Ascending aorta (tissue), 2 donors: ENCODE measurements at regions of chr11 and their contacts with region 1.

Region 1: GRCh38 chr11:95790123-95790932 is at the start of gene CEP57:
- DNase-seq: peak; percentile 86 to 99
- H3K4me3 ChIP-seq: peak within 1 kb of the TSS; percentile 95 to 98
- H3K27ac ChIP-seq: peak within 1 kb of the TSS; percentile 91 to 100
- H3K4me1 ChIP-seq: peaks cover 0 to 22% of the 10 kb centered on the region in 2 donors
- H3K27me3 ChIP-seq: no peaks in the 10 kb centered on the region
- CTCF ChIP-seq: no peak
- total RNA-seq, gene CEP57: 5.4 TPM

Region 2: DNA sequence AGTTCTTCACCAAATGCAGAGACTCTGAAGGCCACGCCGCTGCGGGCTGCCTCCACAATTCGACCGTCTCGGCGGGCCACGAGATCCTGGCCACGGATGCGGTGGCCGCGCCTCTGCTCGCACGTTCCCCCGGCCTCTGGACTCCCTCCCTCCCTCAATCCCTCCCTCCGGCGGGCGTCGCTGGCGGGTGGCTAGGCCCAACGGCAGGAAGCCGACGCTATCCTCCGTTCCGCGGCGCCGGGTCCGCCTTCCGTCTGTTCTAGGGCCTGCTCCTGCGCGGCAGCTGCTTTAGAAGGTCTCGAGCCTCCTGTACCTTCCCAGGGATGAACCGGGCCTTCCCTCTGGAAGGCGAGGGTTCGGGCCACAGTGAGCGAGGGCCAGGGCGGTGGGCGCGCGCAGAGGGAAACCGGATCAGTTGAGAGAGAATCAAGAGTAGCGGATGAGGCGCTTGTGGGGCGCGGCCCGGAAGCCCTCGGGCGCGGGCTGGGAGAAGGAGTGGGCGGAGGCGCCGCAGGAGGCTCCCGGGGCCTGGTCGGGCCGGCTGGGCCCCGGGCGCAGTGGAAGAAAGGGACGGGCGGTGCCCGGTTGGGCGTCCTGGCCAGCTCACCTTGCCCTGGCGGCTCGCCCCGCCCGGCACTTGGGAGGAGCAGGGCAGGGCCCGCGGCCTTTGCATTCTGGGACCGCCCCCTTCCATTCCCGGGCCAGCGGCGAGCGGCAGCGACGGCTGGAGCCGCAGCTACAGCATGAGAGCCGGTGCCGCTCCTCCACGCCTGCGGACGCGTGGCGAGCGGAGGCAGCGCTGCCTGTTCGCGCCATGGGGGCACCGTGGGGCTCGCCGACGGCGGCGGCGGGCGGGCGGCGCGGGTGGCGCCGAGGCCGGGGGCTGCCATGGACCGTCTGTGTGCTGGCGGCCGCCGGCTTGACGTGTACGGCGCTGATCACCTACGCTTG is 1246.4 kb before region 1 on chr11 and contains the start of gene FUT4:
- intact Hi-C with region 1: loop called (anchors 10 kb)
- DNase-seq: peak; percentile 44 to 90
- H3K4me3 ChIP-seq: peak within 1 kb of the TSS; percentile 81 to 93
- H3K27ac ChIP-seq: peak within 1 kb of the TSS; percentile 97 to 100
- H3K4me1 ChIP-seq: peaks cover 7 to 14% of the 10 kb centered on the region in 2 donors
- H3K27me3 ChIP-seq: no peaks in the 10 kb centered on the region
- CTCF ChIP-seq: no peak
- total RNA-seq, gene FUT4: 3.2 TPM

Region 3: GRCh38 chr11:95067039-95067840 is 723.1 kb before region 1 on chr11:
- intact Hi-C with region 1: loop called (anchors 1 kb)
- DNase-seq: peak in 1 of 2 donors; percentile 93
- H3K4me3 ChIP-seq: peak overlapping the region; percentile 88 to 95
- H3K27ac ChIP-seq: peak overlapping the region; percentile 98 to 99
- H3K4me1 ChIP-seq: peaks cover 0 to 14% of the 10 kb centered on the region in 2 donors
- H3K27me3 ChIP-seq: no peaks in the 10 kb centered on the region
- CTCF ChIP-seq: peak; percentile 71 to 78 (median 73)

Region 4: GRCh38 chr11:95821640-95822039 is 31.3 kb after region 1 on chr11:
- intact Hi-C with region 1: no loop called
- DNase-seq: no peak
- H3K4me3 ChIP-seq: no peak overlapping the region
- H3K27ac ChIP-seq: no peak overlapping the region
- H3K4me1 ChIP-seq: no peaks in the 10 kb centered on the region
- H3K27me3 ChIP-seq: no peaks in the 10 kb centered on the region
- CTCF ChIP-seq: no peak

Region 5: GRCh38 chr11:96389720-96390487 is 599.6 kb after region 1 on chr11 and contains the starts of genes CCDC82 and JRKL:
- intact Hi-C with region 1: loop called (anchors 1 kb)
- DNase-seq: peak; percentile 88 to 98
- H3K4me3 ChIP-seq: peak within 1 kb of the TSS; percentile 89 to 97
- H3K27ac ChIP-seq: peak within 1 kb of the TSS; percentile 83 to 90
- H3K4me1 ChIP-seq: peaks cover 0 to 16% of the 10 kb centered on the region in 2 donors
- H3K27me3 ChIP-seq: no peaks in the 10 kb centered on the region
- CTCF ChIP-seq: no peak
- total RNA-seq, gene CCDC82: 9.5 TPM
- total RNA-seq, gene JRKL: 16.6 TPM

Region 6: GRCh38 chr11:97163631-97164191 is 1373.4 kb after region 1 on chr11:
- intact Hi-C with region 1: no loop called
- DNase-seq: no peak
- H3K4me3 ChIP-seq: no peak overlapping the region
- H3K27ac ChIP-seq: no peak overlapping the region
- H3K4me1 ChIP-seq: no peaks in the 10 kb centered on the region
- H3K27me3 ChIP-seq: no peaks in the 10 kb centered on the region
- CTCF ChIP-seq: no peak